Colonic mucosa (tissue), 4 donors: ENCODE measurements at regions of chr1 and their contacts with region 1.

Region 1: DNA sequence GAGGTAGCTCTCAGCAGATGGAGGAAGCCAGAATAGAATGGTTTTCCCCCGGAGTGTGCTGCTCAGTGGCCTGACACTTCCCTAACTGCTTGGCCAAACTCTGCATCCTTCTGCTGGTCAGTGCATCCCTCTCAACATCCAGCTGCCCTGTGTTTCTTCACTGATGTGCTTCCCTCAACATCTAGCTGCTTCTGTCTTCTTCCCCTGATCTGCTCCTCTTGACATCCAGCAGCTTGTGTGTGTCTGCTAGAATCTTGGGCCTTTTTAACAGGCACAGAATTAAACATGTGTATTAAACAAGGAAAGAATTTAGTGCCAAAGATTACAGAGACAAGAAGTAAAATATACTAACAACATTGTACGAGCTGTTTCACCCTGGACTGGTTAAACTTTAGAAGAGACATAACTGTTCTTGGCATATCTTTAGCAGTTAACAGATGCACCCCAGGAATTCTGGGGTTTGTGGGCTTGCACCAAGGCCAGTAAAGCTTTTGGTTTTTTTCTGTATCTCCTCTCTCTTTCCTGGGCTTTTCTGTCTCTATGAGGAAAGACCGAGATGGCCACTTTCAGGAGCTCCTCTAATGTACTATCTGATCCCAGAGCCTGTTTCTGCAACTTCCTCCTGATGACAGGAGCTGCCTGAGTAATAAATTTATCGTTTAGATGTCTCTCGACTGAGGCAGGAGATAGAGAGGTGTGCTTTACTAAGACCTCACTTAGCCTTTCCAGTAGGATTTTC is 34.8 kb upstream of the HSD3B1 start:
- DNase-seq: no peak
- H3K4me3 ChIP-seq: no peak overlapping the region
- H3K27ac ChIP-seq: no peak overlapping the region
- H3K4me1 ChIP-seq: no peaks in the 10 kb centered on the region
- H3K27me3 ChIP-seq: no peaks in the 10 kb centered on the region
- CTCF ChIP-seq: no peak

Region 2: DNA sequence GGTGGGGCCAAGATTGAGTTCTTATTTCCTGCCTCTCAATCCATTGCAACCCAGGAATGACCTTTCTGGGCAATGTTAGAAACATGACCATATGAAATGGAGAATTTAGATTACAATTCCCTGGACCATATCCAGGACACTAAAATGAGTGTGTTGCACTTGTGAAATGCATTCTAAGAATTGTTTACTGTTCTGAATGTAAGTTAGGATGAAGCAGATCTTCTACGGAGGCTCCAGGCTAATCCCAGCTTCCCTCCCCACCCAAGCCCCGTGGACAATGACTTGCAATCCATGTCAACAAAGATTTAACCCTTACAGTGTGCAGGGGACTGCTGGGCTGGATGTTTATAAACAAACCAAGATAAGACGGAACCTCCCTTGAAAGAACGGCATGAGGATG is 135.4 kb before region 1 on chr1:
- intact Hi-C with region 1: no loop called
- DNase-seq: no peak
- H3K4me3 ChIP-seq: no peak overlapping the region
- H3K27ac ChIP-seq: no peak overlapping the region
- H3K4me1 ChIP-seq: no peaks in the 10 kb centered on the region
- H3K27me3 ChIP-seq: no peaks in the 10 kb centered on the region
- CTCF ChIP-seq: no peak

Region 3: GRCh38 chr1:119372490-119373086 is 99.7 kb before region 1 on chr1:
- intact Hi-C with region 1: loop called (anchors 5 kb)
- DNase-seq: peak; percentile 63
- H3K4me3 ChIP-seq: no peak overlapping the region
- H3K27ac ChIP-seq: no peak overlapping the region
- H3K4me1 ChIP-seq: no peaks in the 10 kb centered on the region
- H3K27me3 ChIP-seq: no peaks in the 10 kb centered on the region
- CTCF ChIP-seq: no peak